ENCODE measurements at regions of chr16 and their contacts with region 1.

Region 1: DNA sequence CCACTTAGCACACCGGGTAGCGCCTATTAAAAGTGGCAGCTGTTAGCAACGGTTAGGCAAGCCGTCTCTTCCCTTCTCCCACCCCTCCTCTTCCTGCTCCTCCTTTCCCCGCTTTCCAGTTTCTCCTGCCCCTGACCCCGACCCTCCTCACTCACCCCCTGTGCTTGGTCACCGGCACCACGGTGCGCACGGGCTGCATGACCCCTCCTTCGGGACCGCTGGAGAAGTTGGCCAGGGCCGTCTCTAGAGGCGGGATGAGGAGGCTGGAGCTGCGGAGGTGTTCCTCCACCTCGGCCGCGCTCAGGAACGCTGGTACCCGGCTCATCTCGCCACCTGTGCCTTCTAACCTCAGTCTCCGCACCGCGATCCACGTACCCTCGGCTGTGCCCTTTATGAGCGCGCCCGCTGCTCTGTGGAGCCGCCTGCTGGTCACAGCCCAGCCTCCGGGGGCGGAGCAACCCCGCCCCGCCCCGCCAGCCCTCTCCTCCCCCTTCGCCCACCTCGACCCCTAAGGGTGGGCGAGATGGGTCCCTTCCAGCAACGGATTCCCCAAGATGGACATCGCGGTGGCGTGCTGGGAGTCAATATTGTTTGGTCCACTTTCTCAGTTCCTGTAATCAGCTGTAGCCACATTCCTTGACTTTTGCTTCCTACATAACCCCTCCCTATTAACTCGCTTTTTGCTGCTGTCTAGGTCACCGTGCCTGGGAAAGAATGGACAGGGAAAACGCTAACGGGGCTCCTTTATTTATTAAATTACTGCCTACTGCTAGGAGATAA is at the start of gene CRYM:
- DNase-seq: peak; percentile 52 to 82
- ATAC-seq: peak; percentile 97 to 99
- H3K4me3 ChIP-seq: peak within 1 kb of the TSS; percentile 54
- H3K27ac ChIP-seq: peak within 1 kb of the TSS; percentile 58 to 76
- H3K4me1 ChIP-seq: no peaks in the 10 kb centered on the region
- CTCF ChIP-seq: peak; percentile 87
- EP300 ChIP-seq: no peak
- POLR2A ChIP-seq: no peak
- RAD21 ChIP-seq: peak; percentile 62 to 81
- polyA plus RNA-seq, gene CRYM: 3.1 and 3.4 TPM in 2 replicates

Region 2: DNA sequence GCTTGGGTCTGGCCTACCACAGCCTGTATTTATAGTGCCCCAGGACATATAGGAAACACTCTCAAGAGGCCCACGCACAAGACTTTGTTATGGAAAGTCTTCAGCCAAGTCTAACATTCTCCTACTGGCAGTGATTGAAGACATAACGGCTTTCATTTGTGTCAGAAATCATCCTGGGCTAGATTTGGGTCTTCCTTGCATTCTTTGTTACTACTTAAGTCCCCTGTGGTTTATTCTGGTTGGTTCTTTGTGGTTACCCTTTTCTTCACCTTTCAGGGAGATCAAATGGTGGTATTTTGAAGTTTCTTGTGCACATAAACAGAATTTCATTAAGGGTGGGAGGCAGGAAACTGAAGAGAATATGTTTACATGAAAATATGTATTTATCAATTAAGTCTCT is 434.1 kb before region 1 on chr16:
- CTCF ChIA-PET with region 1: no interaction called
- POLR2A ChIA-PET with region 1: no interaction called
- DNase-seq: no peak
- ATAC-seq: no peak
- H3K4me3 ChIP-seq: no peak overlapping the region
- H3K27ac ChIP-seq: no peak overlapping the region
- H3K4me1 ChIP-seq: no peaks in the 10 kb centered on the region
- CTCF ChIP-seq: no peak
- EP300 ChIP-seq: no peak
- POLR2A ChIP-seq: no peak
- RAD21 ChIP-seq: no peak

Region 3: DNA sequence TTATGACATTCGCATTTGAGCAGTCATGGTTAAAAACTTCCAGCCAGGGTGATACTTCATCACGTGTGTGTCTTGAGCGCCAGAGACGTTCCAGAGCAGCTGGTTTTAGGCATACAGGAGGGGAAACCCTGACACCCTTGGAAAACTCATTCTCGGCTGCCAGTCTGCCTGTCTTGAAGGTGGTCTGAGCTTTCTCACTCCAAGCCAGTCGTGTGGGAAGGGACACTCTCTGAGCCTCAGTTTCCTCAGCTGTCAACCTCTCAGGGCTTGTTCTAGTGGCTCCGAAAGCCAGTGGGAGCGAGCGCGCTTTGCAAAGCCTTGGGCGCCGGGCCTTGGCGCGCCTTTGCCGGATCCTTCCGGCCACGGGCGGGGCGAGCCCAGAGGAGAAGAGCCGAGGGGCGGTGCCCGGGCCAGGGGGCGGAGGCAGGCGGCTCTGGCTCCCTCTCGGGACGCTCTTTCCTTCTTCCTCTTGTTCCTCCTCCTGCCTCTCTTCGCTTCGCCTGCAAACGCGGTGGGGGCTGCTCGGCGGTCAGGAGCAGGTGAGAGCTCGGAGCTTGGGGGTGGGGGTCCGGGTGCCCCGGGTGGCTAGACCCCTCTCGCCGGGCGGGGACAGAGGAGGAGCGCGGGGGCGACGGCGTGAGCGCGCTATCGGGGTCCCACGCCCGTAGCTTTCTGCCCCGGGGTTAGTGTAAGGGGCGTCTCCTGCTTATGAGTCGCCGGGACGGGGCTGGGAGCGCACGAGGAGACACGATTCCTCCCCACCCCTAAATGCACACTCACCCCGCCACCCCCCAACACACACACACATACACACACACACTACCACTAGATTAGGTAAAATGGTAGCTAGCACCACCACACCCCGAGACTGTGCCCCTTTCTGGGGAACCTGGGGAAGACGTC is 119.7 kb before region 1 on chr16 and contains the start of gene LDAF1:
- CTCF ChIA-PET with region 1: interaction called, 24 read pairs
- POLR2A ChIA-PET with region 1: interaction called, 4 read pairs
- DNase-seq: peak; percentile 64 to 75
- ATAC-seq: peak; percentile 97 to 99
- H3K4me3 ChIP-seq: peak within 1 kb of the TSS; percentile 83
- H3K27ac ChIP-seq: peak within 1 kb of the TSS; percentile 84 to 95
- H3K4me1 ChIP-seq: peaks cover 25% of the 10 kb centered on the region; the same call in 2 of the 3 replicates
- CTCF ChIP-seq: no peak
- EP300 ChIP-seq: no peak
- POLR2A ChIP-seq: no peak; the same call in 1 of the 2 replicates
- RAD21 ChIP-seq: no peak; a peak in 1 of 5 replicates
- polyA plus RNA-seq, gene LDAF1: 14.4 and 16.2 TPM in 2 replicates

Region 4: GRCh38 chr16:21194771-21195301 is 83.3 kb before region 1 on chr16:
- CTCF ChIA-PET with region 1: interaction called, 160 read pairs
- POLR2A ChIA-PET with region 1: no interaction called
- DNase-seq: no peak
- ATAC-seq: no peak
- H3K4me3 ChIP-seq: no peak overlapping the region
- H3K27ac ChIP-seq: no peak overlapping the region
- H3K4me1 ChIP-seq: no peaks in the 10 kb centered on the region
- CTCF ChIP-seq: no peak
- EP300 ChIP-seq: no peak
- POLR2A ChIP-seq: no peak
- RAD21 ChIP-seq: no peak

Region 5: GRCh38 chr16:21226749-21227148 is 51.4 kb before region 1 on chr16:
- CTCF ChIA-PET with region 1: interaction called, 10 read pairs
- POLR2A ChIA-PET with region 1: no interaction called
- DNase-seq: no peak
- ATAC-seq: no peak
- H3K4me3 ChIP-seq: no peak overlapping the region
- H3K27ac ChIP-seq: no peak overlapping the region
- H3K4me1 ChIP-seq: peaks cover 16% of the 10 kb centered on the region
- CTCF ChIP-seq: no peak
- EP300 ChIP-seq: no peak
- POLR2A ChIP-seq: no peak
- RAD21 ChIP-seq: no peak

Region 6: DNA sequence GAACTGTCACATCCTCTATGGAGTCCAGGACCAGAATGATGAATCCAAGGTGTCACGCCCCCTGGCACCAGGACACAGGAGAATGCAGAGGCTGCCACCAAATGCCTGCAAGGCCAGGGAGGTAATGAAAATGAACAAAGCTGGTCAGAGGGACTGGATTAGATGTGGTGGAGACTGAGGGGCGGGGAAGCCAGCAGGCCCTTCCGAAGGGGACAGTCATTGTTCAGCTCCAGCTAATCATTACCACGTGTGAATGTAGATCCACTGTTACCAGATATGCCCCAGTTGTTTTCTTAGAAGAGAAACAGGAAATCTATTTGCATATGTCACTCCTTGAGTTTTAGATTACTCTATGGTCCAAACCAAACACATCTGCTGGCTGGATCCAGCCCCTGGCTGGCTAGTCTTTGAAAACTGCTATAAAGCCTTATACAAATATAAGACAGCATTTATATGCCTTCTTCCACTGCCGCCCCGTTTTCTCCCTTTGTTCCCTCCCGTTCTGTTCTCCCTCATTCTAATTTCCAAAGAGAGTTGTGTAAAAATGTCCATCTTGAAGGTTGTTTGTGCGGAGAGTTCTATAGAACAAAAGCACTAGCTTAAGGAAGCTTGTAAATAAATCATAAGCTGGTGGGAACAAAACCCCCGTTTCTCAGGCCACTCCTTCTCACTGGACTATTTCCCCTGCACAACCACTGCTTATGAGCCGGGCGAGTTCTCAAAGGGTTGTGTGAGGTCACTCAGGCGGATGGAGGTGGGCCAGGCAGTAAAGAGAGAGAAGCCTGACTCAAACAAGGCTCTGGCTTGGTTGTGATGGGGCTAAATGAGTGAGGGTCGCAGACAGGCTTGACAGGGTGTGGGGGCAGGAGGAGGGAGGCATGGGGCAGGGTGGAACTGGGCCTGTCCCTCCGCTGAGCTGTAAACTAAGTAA is 14.2 kb before region 1 on chr16:
- CTCF ChIA-PET with region 1: interaction called, 54 read pairs
- POLR2A ChIA-PET with region 1: no interaction called
- DNase-seq: peak; percentile 14 to 30
- ATAC-seq: no peak; a peak in 1 of 6 replicates
- H3K4me3 ChIP-seq: no peak overlapping the region
- H3K27ac ChIP-seq: peak overlapping the region; percentile 4 to 56; a peak in 3 of 6 replicates
- H3K4me1 ChIP-seq: peaks cover 42% of the 10 kb centered on the region
- CTCF ChIP-seq: no peak
- EP300 ChIP-seq: no peak
- POLR2A ChIP-seq: no peak
- RAD21 ChIP-seq: no peak

Region 7: GRCh38 chr16:21300309-21301167 is 22.4 kb after region 1 on chr16:
- CTCF ChIA-PET with region 1: interaction called, 83 read pairs
- POLR2A ChIA-PET with region 1: interaction called, 8 read pairs
- DNase-seq: peak; percentile 96 to 99
- ATAC-seq: peak; percentile 86 to 89
- H3K4me3 ChIP-seq: peak overlapping the region; percentile 63
- H3K27ac ChIP-seq: peak overlapping the region; percentile 82 to 93
- H3K4me1 ChIP-seq: peaks cover 30% of the 10 kb centered on the region
- CTCF ChIP-seq: peak; percentile 97
- EP300 ChIP-seq: 0 out of 5 replicates have a peak, but pooled peaks of 1 of the 2 experiments have one; percentile 7
- POLR2A ChIP-seq: peak; percentile 53
- RAD21 ChIP-seq: peak; percentile 98 to 99

Region 8: DNA sequence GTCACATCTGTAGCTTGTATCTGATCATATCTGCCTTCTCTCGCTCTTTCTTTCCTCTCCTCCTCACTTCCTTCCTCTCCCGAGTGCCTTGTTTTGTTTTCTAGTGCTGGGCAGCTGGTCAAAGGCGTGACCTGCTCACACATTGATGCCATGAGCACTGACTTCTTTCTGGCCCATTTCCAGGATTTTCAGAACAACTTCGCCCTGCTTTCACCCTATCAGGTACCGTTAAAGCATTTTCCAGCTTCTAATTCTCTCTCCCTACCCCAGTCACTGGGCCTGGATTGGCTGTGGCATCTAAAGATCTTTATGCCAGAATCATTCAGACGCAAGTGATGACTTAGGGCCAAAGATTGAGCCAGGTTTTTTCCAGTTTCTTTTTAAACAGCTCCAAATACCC is 441.2 kb after region 1 on chr16:
- CTCF ChIA-PET with region 1: no interaction called
- POLR2A ChIA-PET with region 1: no interaction called
- DNase-seq: no peak
- ATAC-seq: no peak
- H3K4me3 ChIP-seq: no peak overlapping the region
- H3K27ac ChIP-seq: no peak overlapping the region
- H3K4me1 ChIP-seq: no peaks in the 10 kb centered on the region
- CTCF ChIP-seq: no peak
- EP300 ChIP-seq: no peak
- POLR2A ChIP-seq: no peak
- RAD21 ChIP-seq: no peak